ENCODE measurements at regions of chr6 and their contacts with region 1.

Region 1: GRCh38 chr6:33126101-33126714 is 50.4 kb downstream of the HLA-DPB1 start:
- DNase-seq: no peak
- ATAC-seq: peak; percentile 76
- H3K4me3 ChIP-seq: no peak overlapping the region
- H3K27ac ChIP-seq: no peak overlapping the region
- H3K4me1 ChIP-seq: peaks cover 14% of the 10 kb centered on the region
- H3K27me3 ChIP-seq: no peaks in the 10 kb centered on the region
- CTCF ChIP-seq: peak; percentile 48 to 77 (median 71)
- EP300 ChIP-seq: no peak
- POLR2A ChIP-seq: no peak
- RAD21 ChIP-seq: peak; percentile 30

Region 2: GRCh38 chr6:33082702-33083101 is 43.5 kb before region 1 on chr6:
- CTCF ChIA-PET with region 1: interaction called, 16 read pairs
- POLR2A ChIA-PET with region 1: interaction called, 6 read pairs
- RAD21 ChIA-PET with region 1: no interaction called
- SMC1A ChIA-PET with region 1: interaction called, 3 read pairs
- in situ Hi-C with region 1: no loop called
- intact Hi-C with region 1: no loop called
- DNase-seq: no peak
- ATAC-seq: peak; percentile 72
- H3K4me3 ChIP-seq: no peak overlapping the region
- H3K27ac ChIP-seq: 0 out of 2 replicates have a peak overlapping the region, but pooled peaks have one; percentile 35
- H3K4me1 ChIP-seq: peaks cover 21% of the 10 kb centered on the region
- H3K27me3 ChIP-seq: no peaks in the 10 kb centered on the region
- CTCF ChIP-seq: peak; percentile 70 to 73 (median 72)
- EP300 ChIP-seq: no peak
- POLR2A ChIP-seq: no peak
- RAD21 ChIP-seq: peak; percentile 78

Region 3: GRCh38 chr6:33112148-33112547 is 14.1 kb before region 1 on chr6:
- CTCF ChIA-PET with region 1: interaction called, 166 read pairs
- POLR2A ChIA-PET with region 1: interaction called, 6 read pairs
- RAD21 ChIA-PET with region 1: interaction called, 9 read pairs
- SMC1A ChIA-PET with region 1: interaction called, 39 read pairs
- in situ Hi-C with region 1: no loop called
- intact Hi-C with region 1: no loop called
- DNase-seq: peak; percentile 68
- ATAC-seq: peak; percentile 97
- H3K4me3 ChIP-seq: no peak overlapping the region
- H3K27ac ChIP-seq: peak overlapping the region; percentile 41
- H3K4me1 ChIP-seq: peaks cover 40% of the 10 kb centered on the region
- H3K27me3 ChIP-seq: no peaks in the 10 kb centered on the region; a peak in 2 of 4 replicates
- CTCF ChIP-seq: no peak
- EP300 ChIP-seq: no peak
- POLR2A ChIP-seq: no peak
- RAD21 ChIP-seq: no peak

Region 4: GRCh38 chr6:33147807-33148666 is 21.8 kb after region 1 on chr6:
- CTCF ChIA-PET with region 1: interaction called, 266 read pairs
- POLR2A ChIA-PET with region 1: interaction called, 10 read pairs
- RAD21 ChIA-PET with region 1: interaction called, 19 read pairs
- SMC1A ChIA-PET with region 1: interaction called, 127 read pairs
- in situ Hi-C with region 1: no loop called
- intact Hi-C with region 1: loop called (anchors 2 kb)
- DNase-seq: no peak
- ATAC-seq: no peak
- H3K4me3 ChIP-seq: no peak overlapping the region
- H3K27ac ChIP-seq: no peak overlapping the region
- H3K4me1 ChIP-seq: peaks cover 3% of the 10 kb centered on the region; the same call in 1 of the 2 replicates
- H3K27me3 ChIP-seq: peaks cover 0 to 2% of the 10 kb centered on the region in 2 experiments; a peak in 2 of 4 replicates
- CTCF ChIP-seq: peak; percentile 69 to 82 (median 81)
- EP300 ChIP-seq: no peak
- POLR2A ChIP-seq: no peak
- RAD21 ChIP-seq: peak; percentile 93

Region 5: DNA sequence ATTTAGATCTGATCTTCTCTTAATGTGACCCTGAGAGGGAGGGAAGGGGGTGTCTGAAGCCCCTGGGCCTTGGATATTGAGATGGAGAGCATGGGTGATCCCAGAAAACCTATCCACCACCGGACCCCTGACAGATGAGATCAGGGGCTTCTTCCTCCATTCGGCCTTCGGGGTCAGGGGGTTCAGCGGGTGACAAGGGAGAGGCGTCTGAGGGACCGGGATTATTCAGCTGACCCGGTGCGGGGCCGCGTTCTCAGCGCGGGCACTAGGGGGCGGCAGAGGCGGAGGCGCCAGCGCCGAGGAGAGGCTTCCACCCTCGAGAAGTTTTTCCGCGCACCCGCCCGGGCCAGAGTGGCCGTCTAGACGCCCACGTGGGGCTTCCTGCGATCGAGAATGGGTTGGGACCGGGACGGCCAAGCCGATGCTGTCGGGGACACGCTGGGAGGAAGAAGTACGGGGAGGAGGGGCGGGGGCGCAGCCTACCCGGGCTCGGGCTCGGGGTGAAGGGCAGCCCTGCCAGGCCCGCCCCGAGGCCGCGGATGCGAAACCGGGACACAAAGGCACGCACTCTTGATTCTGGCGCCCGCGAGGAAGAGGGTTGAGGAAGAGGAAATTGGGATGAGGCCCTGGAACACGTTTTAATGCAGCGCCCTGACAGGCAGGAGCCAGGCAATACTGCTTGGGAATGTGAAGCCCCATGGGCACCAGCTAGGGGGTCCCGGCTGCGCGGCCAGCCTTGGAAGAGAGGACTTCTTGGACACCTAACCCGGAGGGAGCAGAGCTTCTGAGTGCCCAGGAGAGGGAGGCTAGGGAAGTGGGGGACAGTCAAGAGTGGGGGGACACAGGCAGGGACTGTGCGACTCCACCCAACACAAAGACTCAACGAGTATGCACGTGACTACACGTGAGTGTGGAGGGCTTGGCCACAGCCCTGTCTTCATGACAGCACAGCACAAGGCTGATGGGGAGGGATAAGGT is 35.4 kb after region 1 on chr6:
- CTCF ChIA-PET with region 1: interaction called, 184 read pairs
- POLR2A ChIA-PET with region 1: interaction called, 4 read pairs
- RAD21 ChIA-PET with region 1: interaction called, 3 read pairs
- SMC1A ChIA-PET with region 1: interaction called, 17 read pairs
- in situ Hi-C with region 1: no loop called
- intact Hi-C with region 1: no loop called
- DNase-seq: no peak
- ATAC-seq: peak; percentile 96
- H3K4me3 ChIP-seq: peak overlapping the region; percentile 70; the same call in 1 of the 2 replicates
- H3K27ac ChIP-seq: no peak overlapping the region
- H3K4me1 ChIP-seq: peaks cover 4% of the 10 kb centered on the region
- H3K27me3 ChIP-seq: no peaks in the 10 kb centered on the region
- CTCF ChIP-seq: peak; percentile 89 to 97 (median 96); a peak in 5 of 6 replicates
- EP300 ChIP-seq: no peak
- POLR2A ChIP-seq: no peak
- RAD21 ChIP-seq: peak; percentile 64

Region 6: GRCh38 chr6:33200219-33201146 is 74.3 kb after region 1 on chr6 and contains the starts of genes RXRB and SLC39A7:
- CTCF ChIA-PET with region 1: interaction called, 26 read pairs
- POLR2A ChIA-PET with region 1: no interaction called
- RAD21 ChIA-PET with region 1: interaction called, 3 read pairs
- SMC1A ChIA-PET with region 1: interaction called, 4 read pairs
- in situ Hi-C with region 1: no loop called
- intact Hi-C with region 1: no loop called
- DNase-seq: peak; percentile 99
- ATAC-seq: peak; percentile 77
- H3K4me3 ChIP-seq: peak within 1 kb of the TSS; percentile 95
- H3K27ac ChIP-seq: peak within 1 kb of the TSS; percentile 99
- H3K4me1 ChIP-seq: peaks cover 33% of the 10 kb centered on the region
- H3K27me3 ChIP-seq: no peaks in the 10 kb centered on the region
- CTCF ChIP-seq: no peak
- EP300 ChIP-seq: peak in 1 of 2 experiments; percentile 12; a peak in 1 of 4 replicates
- POLR2A ChIP-seq: peak; percentile 95
- RAD21 ChIP-seq: no peak
- polyA plus RNA-seq, gene RXRB: 0.71 to 1.6 TPM
- polyA plus RNA-seq, gene SLC39A7: 7.3 to 8.4 TPM